ENCODE measurements at regions of chr15 and their contacts with region 1.

Region 1: DNA sequence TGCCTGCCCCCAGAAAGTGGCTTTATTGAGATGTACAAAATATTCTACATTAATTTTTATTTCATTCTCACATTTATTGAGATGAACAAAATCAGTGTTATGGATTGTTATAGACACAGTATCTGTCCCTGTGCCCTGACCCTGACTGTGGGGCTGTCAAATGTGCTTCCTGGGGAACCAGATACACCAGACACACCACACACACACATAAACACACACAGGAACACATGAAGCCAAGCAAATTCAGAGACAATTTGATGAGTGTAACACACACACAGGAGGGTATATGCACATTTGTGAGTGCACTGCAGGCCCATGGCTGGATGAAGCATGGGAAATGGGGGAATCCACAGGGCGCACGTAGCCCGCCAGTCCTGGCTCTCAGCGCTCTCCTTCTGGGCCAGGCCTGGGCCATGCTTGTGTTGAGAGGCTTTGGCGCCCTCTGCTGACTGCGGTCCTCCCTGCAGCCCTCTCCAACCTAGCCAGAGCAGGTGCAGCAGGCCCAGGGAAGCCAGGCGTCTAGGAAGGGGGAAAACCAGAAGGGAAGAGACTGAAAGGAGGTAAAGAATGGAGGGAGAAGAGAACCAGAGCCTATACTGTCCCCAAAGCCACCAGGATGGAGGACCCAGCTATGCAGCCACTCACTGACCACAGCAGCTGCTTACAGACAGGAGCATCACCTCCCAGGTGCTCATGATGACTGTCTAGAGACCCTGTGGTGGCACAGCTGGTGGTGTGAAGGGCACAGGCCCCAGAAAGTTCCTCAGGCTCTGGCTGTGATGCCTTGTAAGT is 18.0 kb upstream of the LOXL1 start:
- DNase-seq: peak; percentile 55
- H3K4me3 Mint-ChIP-seq: no peak overlapping the region
- H3K27ac Mint-ChIP-seq: no peak overlapping the region
- H3K4me1 Mint-ChIP-seq: no peaks in the 10 kb centered on the region
- H3K27me3 Mint-ChIP-seq: no peaks in the 10 kb centered on the region

Region 2: DNA sequence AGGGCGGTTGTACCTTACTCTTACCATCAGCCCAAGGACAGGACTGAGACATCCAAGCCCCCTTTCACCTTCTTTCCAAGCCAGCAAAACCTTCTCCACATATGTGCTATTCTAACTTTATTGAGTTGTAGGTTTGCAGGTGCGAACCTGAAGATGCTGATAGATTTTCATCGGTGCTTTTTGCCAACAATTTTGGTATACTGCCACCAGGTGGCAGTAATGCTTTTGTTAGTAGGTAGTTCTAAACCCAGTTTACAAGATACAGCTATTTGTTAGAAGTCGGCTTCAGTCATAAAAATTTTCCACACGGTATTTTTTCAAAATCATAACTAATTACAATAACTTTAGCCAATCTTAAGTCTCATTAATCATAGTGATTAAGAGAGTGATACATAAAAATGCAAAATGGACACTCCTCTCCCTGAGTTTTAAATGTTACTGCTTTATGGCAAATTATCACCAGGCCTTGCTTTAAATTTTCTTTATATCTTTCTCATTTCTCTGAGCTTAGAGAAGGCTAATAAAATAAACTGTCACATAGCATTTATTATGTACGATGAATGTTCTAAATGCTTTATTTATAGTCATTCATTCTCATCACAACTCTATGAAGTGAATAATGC is 34.2 kb before region 1 on chr15:
- intact Hi-C with region 1: loop called (anchors 1 kb)
- DNase-seq: no peak
- H3K4me3 Mint-ChIP-seq: no peak overlapping the region
- H3K27ac Mint-ChIP-seq: no peak overlapping the region
- H3K4me1 Mint-ChIP-seq: peaks cover 1% of the 10 kb centered on the region
- H3K27me3 Mint-ChIP-seq: peaks cover 37% of the 10 kb centered on the region

Region 3: DNA sequence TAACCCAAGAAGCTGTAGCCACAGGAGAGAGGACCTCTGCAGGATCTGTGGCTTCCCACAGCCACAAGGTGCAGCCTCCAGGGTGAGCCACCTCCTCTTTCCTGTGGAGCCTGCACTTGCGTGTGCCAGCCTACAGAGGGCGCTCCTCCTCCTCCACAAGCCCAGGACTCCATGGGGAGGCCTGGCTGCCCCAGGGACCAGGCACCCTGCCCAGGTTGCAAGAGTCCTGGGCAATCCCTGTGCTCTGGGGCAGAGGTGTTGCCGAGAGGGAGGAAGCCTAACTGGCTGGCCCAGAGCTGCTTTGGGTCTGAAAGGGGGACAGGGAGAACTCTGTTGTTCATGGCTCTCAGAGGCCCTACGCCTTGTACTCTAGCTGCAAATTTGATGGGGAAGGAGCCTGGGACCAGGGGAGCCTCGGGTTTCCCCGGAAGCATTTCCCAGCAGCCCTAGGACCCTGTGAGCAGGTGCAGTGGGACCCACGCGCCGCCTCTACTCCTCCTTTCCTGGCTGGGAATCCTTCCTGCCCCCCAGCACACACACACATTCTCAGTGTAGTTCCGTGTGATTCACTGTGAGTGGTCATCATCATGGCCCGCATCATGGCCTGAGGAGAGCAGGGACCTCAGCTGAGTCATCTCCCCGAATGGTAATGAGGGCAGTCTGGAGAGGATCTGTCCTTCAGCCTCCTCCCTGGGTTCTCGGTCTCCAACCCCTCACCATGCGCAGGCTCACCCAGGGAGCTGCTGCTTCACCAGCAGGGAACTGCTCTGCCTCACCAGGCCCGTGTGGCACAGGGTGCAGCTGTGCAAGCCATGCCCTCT is 10.6 kb before region 1 on chr15:
- intact Hi-C with region 1: loop called (anchors 1 kb)
- DNase-seq: peak; percentile 58
- H3K4me3 Mint-ChIP-seq: no peak overlapping the region
- H3K27ac Mint-ChIP-seq: no peak overlapping the region
- H3K4me1 Mint-ChIP-seq: peaks cover 3% of the 10 kb centered on the region
- H3K27me3 Mint-ChIP-seq: peaks cover 4% of the 10 kb centered on the region

Region 4: DNA sequence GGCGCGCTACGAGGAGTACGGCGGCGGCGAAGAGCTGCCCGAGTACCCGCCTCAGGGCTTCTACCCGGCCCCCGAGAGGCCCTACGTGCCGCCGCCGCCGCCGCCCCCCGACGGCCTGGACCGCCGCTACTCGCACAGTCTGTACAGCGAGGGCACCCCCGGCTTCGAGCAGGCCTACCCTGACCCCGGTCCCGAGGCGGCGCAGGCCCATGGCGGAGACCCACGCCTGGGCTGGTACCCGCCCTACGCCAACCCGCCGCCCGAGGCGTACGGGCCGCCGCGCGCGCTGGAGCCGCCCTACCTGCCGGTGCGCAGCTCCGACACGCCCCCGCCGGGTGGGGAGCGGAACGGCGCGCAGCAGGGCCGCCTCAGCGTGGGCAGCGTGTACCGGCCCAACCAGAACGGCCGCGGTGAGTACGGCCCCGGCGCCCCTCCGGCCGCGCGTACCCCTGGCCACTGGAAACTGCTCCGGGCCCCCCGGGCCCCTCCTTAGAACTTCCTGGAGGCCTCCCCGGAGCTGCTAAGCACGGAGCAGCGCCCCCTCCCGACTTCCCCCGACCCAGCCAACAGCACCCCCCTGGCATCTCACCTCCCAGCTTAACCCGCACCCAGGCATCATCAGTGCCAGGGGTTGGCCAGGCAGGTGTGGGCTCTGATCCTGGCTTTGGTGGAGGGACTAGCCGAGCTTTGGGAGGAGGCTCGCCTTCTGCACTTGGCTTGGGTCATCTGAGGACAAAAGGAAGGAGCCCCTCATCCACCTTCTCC is 19.4 kb after region 1 on chr15:
- intact Hi-C with region 1: no loop called
- DNase-seq: peak; percentile 57
- H3K4me3 Mint-ChIP-seq: peak overlapping the region; percentile 69
- H3K27ac Mint-ChIP-seq: no peak overlapping the region
- H3K4me1 Mint-ChIP-seq: peaks cover 20% of the 10 kb centered on the region
- H3K27me3 Mint-ChIP-seq: peaks cover 9% of the 10 kb centered on the region

Measured in activated T-helper 2 cell treated with anti-CD3 and anti-CD28 coated beads, Interferon-gamma antibody, Interleukin-2, Interleukin-4, amounts not matched to agents 10 μg/mL and 5 μg/mL and 100 μg/mL, durations not matched to agents 14 hours and 24 hours and 36 hours (primary cell).